Activated naive CD4-positive, alpha-beta T cell treated with anti-CD3 and anti-CD28 coated beads for 36 hours (primary cell): ENCODE measurements at regions of chr6 and their contacts with region 1.

Region 1: GRCh38 chr6:57172136-57173055 is at the start of gene BAG2:
- DNase-seq: peak; percentile 88
- H3K4me3 Mint-ChIP-seq: peak within 1 kb of the TSS; percentile 92
- H3K27ac Mint-ChIP-seq: peak within 1 kb of the TSS; percentile 85
- H3K4me1 Mint-ChIP-seq: peaks cover 31% of the 10 kb centered on the region
- H3K27me3 Mint-ChIP-seq: no peaks in the 10 kb centered on the region
- total RNA-seq, gene BAG2: 6.8 to 7.0 TPM

Region 2: GRCh38 chr6:56062836-56063235 is 1109.6 kb before region 1 on chr6:
- CTCF ChIA-PET with region 1: no interaction called
- intact Hi-C with region 1: no loop called
- DNase-seq: no peak
- H3K4me3 Mint-ChIP-seq: no peak overlapping the region
- H3K27ac Mint-ChIP-seq: no peak overlapping the region
- H3K4me1 Mint-ChIP-seq: no peaks in the 10 kb centered on the region
- H3K27me3 Mint-ChIP-seq: no peaks in the 10 kb centered on the region

Region 3: GRCh38 chr6:56902641-56903464 is 269.5 kb before region 1 on chr6:
- CTCF ChIA-PET with region 1: interaction called, 3 read pairs
- intact Hi-C with region 1: loop called (anchors 5 kb)
- DNase-seq: no peak
- H3K4me3 Mint-ChIP-seq: no peak overlapping the region
- H3K27ac Mint-ChIP-seq: no peak overlapping the region
- H3K4me1 Mint-ChIP-seq: peaks cover 2% of the 10 kb centered on the region
- H3K27me3 Mint-ChIP-seq: peaks cover 5% of the 10 kb centered on the region

Region 4: DNA sequence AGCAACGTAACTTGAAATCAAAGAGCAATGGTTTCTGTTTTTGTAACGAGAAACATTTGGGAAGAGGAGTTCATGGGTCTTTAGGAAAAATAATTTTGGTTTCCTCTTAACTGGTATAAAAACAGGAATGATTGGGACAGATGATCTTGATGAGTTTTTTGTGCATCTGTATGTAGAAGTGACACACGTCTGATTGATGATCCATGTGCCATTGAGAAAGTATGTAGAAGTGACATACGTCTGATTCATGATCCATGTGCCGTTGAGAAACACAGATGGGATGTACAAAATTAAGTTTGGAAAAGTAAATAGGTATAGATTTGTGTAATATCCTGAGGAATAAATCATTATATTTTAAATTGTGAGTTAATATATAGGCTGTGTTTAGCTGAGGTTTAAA is 123.8 kb before region 1 on chr6:
- CTCF ChIA-PET with region 1: no interaction called
- intact Hi-C with region 1: loop called (anchors 1 kb)
- DNase-seq: no peak
- H3K4me3 Mint-ChIP-seq: peak overlapping the region; percentile 68
- H3K27ac Mint-ChIP-seq: no peak overlapping the region
- H3K4me1 Mint-ChIP-seq: peaks cover 21% of the 10 kb centered on the region
- H3K27me3 Mint-ChIP-seq: peaks cover 14% of the 10 kb centered on the region

Region 5: GRCh38 chr6:57089687-57090460 is 82.5 kb before region 1 on chr6 and contains the start of gene ZNF451:
- CTCF ChIA-PET with region 1: no interaction called
- intact Hi-C with region 1: loop called (anchors 1 kb)
- DNase-seq: peak; percentile 98
- H3K4me3 Mint-ChIP-seq: peak within 1 kb of the TSS; percentile 88
- H3K27ac Mint-ChIP-seq: peak within 1 kb of the TSS; percentile 89
- H3K4me1 Mint-ChIP-seq: peaks cover 32% of the 10 kb centered on the region
- H3K27me3 Mint-ChIP-seq: no peaks in the 10 kb centered on the region
- total RNA-seq, gene ZNF451: 43.8 to 46.2 TPM

Region 6: DNA sequence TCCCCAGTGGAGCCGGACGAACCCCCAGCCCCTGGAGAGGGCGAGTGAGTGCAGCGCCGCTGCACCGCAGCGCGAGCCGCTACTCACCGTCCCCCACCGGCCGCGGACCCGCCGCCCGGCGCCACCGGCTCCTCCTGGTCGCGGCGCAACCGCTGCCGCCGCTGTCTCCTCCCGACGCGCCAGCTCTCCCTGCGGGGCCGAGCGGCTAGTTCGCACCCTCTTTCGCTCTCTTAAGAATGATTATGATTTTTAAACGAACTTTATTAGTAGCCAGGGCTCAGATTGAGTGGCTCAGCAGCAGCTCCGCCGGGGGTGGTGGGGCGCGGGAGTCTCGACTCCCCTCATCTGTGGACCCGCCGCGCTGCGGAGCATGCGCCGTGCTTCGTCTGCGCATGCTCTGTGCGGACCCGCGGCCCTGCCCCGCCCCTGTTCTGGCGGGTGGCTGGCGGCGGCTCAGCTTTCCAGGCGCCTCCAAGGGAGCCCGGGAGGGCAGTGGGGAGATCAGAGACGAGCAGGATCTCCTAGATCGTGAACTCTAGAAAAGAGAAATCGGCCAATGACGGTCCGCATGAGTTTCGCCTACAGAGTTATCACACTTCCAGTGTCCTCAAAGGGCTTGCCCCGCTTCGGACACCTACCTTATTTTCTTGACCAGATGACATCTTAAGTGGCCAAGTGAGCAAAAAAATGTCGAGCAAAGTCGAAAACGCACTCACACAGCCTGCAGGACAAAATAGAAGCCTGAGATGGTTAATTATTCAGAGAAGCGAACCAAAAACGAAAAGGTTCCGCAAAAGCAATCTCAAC is 49.7 kb after region 1 on chr6 and contains the start of gene RAB23:
- CTCF ChIA-PET with region 1: interaction called, 3 read pairs
- intact Hi-C with region 1: loop called (anchors 1 kb)
- DNase-seq: peak; percentile 74
- H3K4me3 Mint-ChIP-seq: peak within 1 kb of the TSS; percentile 99
- H3K27ac Mint-ChIP-seq: peak within 1 kb of the TSS; percentile 93
- H3K4me1 Mint-ChIP-seq: peaks cover 14% of the 10 kb centered on the region
- H3K27me3 Mint-ChIP-seq: peaks cover 18% of the 10 kb centered on the region
- total RNA-seq, gene RAB23: 1.1 to 1.7 TPM

Region 7: GRCh38 chr6:57288115-57288514 is 115.7 kb after region 1 on chr6:
- CTCF ChIA-PET with region 1: no interaction called
- intact Hi-C with region 1: no loop called
- DNase-seq: no peak
- H3K4me3 Mint-ChIP-seq: no peak overlapping the region
- H3K27ac Mint-ChIP-seq: no peak overlapping the region
- H3K4me1 Mint-ChIP-seq: no peaks in the 10 kb centered on the region
- H3K27me3 Mint-ChIP-seq: peaks cover 24% of the 10 kb centered on the region